ENCODE measurements at regions of chr14 and their contacts with region 1.

Region 1: DNA sequence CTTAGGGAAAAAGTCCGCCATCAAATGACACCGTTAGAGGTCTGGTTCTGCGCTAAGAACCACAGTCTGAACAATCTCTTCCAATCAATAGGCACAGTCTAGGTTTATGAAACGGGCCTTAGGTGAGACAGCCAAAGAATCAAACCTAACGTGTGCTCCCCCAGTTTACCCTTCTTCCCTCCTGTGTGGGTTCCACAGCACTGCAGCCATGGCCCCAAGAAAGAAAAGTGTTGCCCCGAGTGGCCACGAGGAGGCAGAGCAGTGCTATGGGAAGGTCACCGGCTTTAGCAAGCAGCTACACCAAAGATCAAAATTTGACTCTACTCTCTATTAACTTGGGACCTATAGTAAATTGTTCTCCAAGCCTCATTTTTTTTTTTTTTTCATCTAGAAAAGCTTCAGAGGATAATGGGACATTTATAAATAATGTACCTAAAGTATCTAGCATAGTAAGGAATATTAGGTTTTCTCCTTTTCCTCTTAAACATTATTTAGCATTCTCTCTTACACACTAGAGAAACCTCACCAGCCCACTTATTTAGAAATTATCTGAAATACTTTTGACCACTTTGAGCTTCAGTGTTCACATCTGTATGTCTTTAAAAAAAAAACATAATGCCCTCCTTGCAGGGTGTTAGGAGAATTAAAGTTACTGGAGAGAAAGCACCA is 70.2 kb upstream of the GPHB5 start:
- DNase-seq: no peak

Region 2: DNA sequence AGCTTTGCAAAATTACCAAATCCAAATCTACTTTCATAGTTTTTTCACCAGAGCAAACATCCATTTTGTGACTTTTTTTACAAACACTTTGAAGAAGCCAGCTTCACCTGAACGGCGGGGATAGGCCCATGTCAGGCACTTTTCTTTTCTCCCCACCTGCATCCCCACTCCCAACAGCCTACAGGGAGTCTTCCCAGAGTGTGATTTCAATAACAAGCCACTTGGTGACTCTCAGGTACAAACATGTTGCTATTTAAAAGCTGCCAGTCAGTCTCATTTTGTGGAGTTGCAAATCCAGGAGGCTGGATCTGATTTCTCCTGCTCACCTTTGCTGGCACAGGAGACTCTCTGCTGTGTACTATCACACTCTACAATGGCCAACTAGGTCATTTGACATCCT is 629.1 kb before region 1 on chr14:
- intact Hi-C with region 1: no loop called
- DNase-seq: no peak

Region 3: DNA sequence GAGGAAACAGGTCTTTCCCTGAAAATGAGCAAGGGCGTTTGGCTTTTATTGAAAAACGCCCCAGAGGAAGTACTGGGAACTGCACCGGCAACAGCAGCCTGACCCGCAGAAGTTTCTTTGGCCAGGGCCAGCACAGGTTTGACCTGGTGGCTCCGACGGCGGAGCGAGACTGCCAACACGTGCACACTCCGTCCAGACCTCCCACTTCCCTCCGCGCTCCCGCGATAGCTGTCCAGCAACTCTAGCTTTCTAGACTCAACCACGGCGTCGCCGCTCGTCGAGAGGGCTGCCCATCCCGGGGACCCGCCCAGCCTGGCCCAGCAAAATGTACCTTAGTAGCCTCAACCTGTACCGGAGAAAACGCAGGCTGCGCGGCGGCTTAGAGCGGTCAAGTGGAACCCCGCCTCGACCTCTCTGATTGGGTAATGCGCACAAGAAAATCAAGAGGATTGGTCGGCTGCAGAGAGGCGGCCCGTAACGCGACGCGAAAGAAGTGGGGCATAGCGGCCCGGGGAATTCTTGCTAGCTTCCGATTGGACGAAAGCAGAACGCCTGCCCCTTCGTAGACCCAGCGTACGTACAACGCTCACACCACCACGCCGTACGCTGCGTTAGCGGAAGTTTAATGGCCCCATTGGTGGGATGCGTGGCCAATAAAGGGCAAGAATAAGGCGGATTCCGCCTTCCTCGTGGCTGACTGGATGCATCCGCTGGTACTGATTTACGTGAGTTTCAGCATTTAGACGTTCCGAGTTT is 252.8 kb after region 1 on chr14 and contains the start of gene WDR89:
- intact Hi-C with region 1: loop called (anchors 1 kb)
- DNase-seq: peak; percentile 98
- total RNA-seq, gene WDR89: 6.9 TPM

Measured in cardiac septum (tissue), 1 donor.